Activated CD4-positive, alpha-beta memory T cell treated with anti-CD3 and anti-CD28 coated beads for 36 hours (primary cell): ENCODE measurements at regions of chr2 and their contacts with region 1.

Region 1: GRCh38 chr2:7473135-7473771 is 556.0 kb downstream of the RNF144A start:
- DNase-seq: no peak
- H3K4me3 Mint-ChIP-seq: no peak overlapping the region
- H3K27ac Mint-ChIP-seq: peak overlapping the region; percentile 71
- H3K4me1 Mint-ChIP-seq: peaks cover 48% of the 10 kb centered on the region
- H3K27me3 Mint-ChIP-seq: peaks cover 1% of the 10 kb centered on the region

Region 2: GRCh38 chr2:7083577-7084509 is 389.4 kb before region 1 on chr2:
- CTCF ChIA-PET with region 1: no interaction called
- POLR2A ChIA-PET with region 1: no interaction called
- intact Hi-C with region 1: no loop called
- DNase-seq: peak; percentile 24
- H3K4me3 Mint-ChIP-seq: no peak overlapping the region
- H3K27ac Mint-ChIP-seq: no peak overlapping the region
- H3K4me1 Mint-ChIP-seq: peaks cover 4% of the 10 kb centered on the region
- H3K27me3 Mint-ChIP-seq: no peaks in the 10 kb centered on the region

Region 3: GRCh38 chr2:7517088-7517487 is 43.8 kb after region 1 on chr2:
- CTCF ChIA-PET with region 1: no interaction called
- POLR2A ChIA-PET with region 1: no interaction called
- intact Hi-C with region 1: loop called (anchors 2 kb)
- DNase-seq: peak; percentile 55
- H3K4me3 Mint-ChIP-seq: peak overlapping the region; percentile 28
- H3K27ac Mint-ChIP-seq: peak overlapping the region; percentile 91
- H3K4me1 Mint-ChIP-seq: peaks cover 39% of the 10 kb centered on the region
- H3K27me3 Mint-ChIP-seq: no peaks in the 10 kb centered on the region

Region 4: DNA sequence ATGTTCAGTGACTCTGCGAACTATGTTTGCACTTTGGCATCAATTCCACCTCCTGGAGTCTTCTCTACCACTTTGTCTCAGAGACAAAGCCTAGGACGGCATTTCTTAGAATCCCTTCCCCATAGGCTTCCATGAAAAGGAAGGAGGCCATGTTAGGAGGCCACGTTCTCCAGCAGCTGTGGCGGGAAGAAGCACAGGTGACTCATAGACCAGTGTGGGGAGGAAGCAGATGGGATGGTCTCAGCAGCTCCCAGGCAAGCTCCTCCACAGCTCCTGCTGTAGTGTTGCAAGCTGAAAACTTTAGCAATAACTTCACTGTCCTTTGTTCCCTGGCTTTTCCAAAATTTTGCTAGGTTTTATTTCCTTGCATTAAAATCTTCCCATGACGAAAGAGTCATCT is 427.3 kb after region 1 on chr2:
- CTCF ChIA-PET with region 1: no interaction called
- POLR2A ChIA-PET with region 1: no interaction called
- intact Hi-C with region 1: no loop called
- DNase-seq: no peak
- H3K4me3 Mint-ChIP-seq: no peak overlapping the region
- H3K27ac Mint-ChIP-seq: no peak overlapping the region
- H3K4me1 Mint-ChIP-seq: peaks cover 8% of the 10 kb centered on the region
- H3K27me3 Mint-ChIP-seq: peaks cover 2% of the 10 kb centered on the region